IMR-90 (cell line): ENCODE measurements at regions of chr17 and their contacts with region 1.

Region 1: DNA sequence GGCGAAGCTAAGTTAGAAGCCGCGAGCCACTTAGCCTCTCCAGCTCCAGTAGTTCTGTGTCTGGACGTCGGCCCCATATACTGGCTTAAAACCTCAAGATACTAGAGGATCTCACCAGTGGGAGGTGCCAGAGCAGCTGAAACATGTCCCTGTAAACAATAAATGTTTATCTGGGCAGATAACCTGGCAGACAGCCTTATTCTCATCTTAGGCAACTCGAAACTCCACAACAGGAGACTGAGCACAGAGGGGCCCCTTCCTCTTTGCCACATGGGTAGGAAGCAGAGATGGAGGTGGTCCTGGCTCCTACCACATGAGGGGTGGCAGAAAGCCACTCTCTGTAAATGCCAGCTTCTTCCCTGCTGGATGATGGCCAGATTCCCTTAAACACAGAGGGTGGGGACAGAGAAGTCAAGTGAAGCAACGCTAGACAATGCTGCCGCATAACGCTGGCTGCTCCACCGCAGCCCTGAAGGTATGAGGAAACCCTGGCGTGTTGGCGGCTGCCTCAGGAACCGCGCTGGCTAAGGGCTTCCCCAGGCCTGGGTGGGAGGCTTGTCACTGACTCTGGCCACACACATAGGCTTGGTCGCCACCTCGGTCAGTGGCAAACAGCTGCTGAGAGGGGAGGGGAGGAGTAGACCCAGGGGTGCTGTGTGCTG is 67.9 kb downstream of the HIC1 start:
- DNase-seq: peak; percentile 87
- ATAC-seq: peak; percentile 79
- H3K4me3 ChIP-seq: no peak overlapping the region
- H3K27ac ChIP-seq: peak overlapping the region; percentile 88
- H3K4me1 ChIP-seq: peaks cover 23% of the 10 kb centered on the region
- H3K27me3 ChIP-seq: no peaks in the 10 kb centered on the region
- CTCF ChIP-seq: peak; percentile 47; the same call in 1 of the 2 replicates
- POLR2A ChIP-seq: 0 out of 2 replicates have a peak, but pooled peaks have one; percentile 40
- RAD21 ChIP-seq: peak; percentile 46

Region 2: DNA sequence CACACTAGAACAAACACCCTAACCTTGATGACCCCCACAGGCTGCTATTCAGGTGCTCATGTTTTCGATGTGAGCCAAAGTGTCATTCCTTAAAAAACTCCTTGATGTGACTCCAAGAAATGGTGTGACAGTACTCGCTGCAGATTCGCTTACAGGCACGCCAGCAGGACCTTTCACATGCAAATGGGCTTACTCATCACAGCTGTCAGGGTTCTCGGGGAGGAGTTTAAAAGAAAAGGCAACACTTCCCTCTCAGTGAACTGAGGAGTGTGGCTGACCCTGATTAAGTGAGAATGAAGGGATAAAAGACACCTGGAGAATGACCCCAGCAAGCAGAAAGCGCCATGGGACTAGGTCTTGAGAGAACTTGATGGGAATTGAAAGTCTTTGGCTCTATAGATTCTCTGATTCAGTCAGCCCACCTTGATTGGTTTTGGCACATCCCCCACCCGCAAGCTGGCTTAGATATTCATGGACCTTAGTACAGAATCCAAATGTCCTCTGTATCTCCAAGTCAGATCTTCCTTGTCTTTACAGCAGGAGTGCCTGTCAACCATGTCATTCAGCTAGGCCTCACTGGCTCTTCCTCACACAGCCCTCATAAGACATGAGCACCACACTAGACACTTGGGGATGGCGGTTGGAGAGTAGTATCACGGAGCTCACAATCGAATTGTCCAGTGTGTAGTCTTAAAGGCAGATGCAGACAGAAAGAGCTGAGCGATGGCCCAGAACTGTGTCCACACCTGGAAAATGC is 14.7 kb after region 1 on chr17:
- CTCF ChIA-PET with region 1: interaction called, 14 read pairs
- POLR2A ChIA-PET with region 1: no interaction called
- dilution Hi-C with region 1: no loop called
- in situ Hi-C with region 1: no loop called
- intact Hi-C with region 1: no loop called
- DNase-seq: peak; percentile 90
- ATAC-seq: peak; percentile 89
- H3K4me3 ChIP-seq: no peak overlapping the region
- H3K27ac ChIP-seq: peak overlapping the region; percentile 95
- H3K4me1 ChIP-seq: peaks cover 27% of the 10 kb centered on the region
- H3K27me3 ChIP-seq: no peaks in the 10 kb centered on the region
- CTCF ChIP-seq: no peak
- POLR2A ChIP-seq: no peak
- RAD21 ChIP-seq: 0 out of 2 replicates have a peak, but pooled peaks have one; percentile 10

Region 3: GRCh38 chr17:2144701-2145100 is 21.9 kb after region 1 on chr17:
- CTCF ChIA-PET with region 1: interaction called, 11 read pairs
- POLR2A ChIA-PET with region 1: no interaction called
- dilution Hi-C with region 1: no loop called
- in situ Hi-C with region 1: no loop called
- intact Hi-C with region 1: no loop called
- DNase-seq: no peak
- ATAC-seq: no peak
- H3K4me3 ChIP-seq: no peak overlapping the region
- H3K27ac ChIP-seq: no peak overlapping the region
- H3K4me1 ChIP-seq: peaks cover 4% of the 10 kb centered on the region; the same call in 1 of the 2 replicates
- H3K27me3 ChIP-seq: no peaks in the 10 kb centered on the region
- CTCF ChIP-seq: no peak
- POLR2A ChIP-seq: no peak
- RAD21 ChIP-seq: no peak